ENCODE measurements at regions of chr1 and their contacts with region 1.

Region 1: DNA sequence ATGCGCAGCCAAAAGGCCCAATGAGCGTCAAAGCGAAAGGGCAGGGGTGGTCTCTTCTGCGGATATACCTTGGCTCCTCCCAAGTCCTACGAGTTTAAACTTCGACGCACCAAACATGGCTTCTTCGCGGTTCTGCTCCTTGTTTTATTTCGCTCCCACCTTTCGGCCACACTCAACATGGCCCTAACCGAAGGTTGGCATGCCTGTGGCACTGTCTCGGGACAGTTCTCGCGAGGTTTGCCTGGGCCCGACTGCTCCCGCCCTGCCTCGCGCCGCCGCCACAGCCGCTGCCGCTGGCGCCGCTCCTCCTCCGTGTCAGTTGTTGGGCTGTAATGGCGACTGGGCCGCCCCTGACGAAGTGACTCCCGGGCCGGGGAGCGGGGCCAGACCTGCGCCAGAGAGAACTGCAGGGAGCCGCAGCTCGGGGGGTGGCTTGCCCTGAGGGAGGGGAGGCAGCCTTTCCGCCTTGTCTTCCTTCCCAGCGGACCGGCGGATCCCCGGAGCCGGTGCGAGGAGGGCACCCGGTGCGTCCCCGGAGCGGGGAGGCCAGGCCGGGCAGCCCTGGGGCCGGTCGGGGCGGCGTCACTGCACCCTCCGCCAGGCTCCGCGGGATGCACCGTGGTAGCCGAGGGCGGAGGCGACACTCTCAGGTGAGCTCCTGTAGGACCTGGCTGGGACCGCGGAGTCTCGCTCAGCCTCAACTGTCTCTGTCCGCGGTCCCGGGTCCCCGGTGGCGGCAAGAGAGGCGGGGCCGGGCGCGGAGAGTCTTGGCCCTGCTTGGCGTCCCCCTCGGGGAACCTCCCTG is at the start of gene CEP350:
- DNase-seq: peak; percentile 96 to 99 (median 98)
- H3K4me3 ChIP-seq: peak within 1 kb of the TSS; percentile 88
- H3K4me3 Mint-ChIP-seq: peak within 1 kb of the TSS; percentile 90 to 96 (median 93)
- H3K27ac ChIP-seq: peak within 1 kb of the TSS; percentile 78
- H3K27ac Mint-ChIP-seq: peak within 1 kb of the TSS; percentile 93 to 98 (median 96)
- H3K4me1 ChIP-seq: peaks cover 42% of the 10 kb centered on the region
- H3K4me1 Mint-ChIP-seq: peaks cover 56 to 68% (median 64%) of the 10 kb centered on the region in 3 donors
- H3K27me3 ChIP-seq: no peaks in the 10 kb centered on the region
- H3K27me3 Mint-ChIP-seq: no peaks in the 10 kb centered on the region
- total RNA-seq, gene CEP350: 41.4 to 43.3 TPM

Region 2: GRCh38 chr1:179848233-179848632 is 106.5 kb before region 1 on chr1:
- CTCF ChIA-PET with region 1: no interaction called
- POLR2A ChIA-PET with region 1: no interaction called
- DNase-seq: no peak
- H3K4me3 ChIP-seq: no peak overlapping the region
- H3K4me3 Mint-ChIP-seq: no peak overlapping the region
- H3K27ac ChIP-seq: no peak overlapping the region
- H3K27ac Mint-ChIP-seq: no peak overlapping the region
- H3K4me1 ChIP-seq: no peaks in the 10 kb centered on the region
- H3K4me1 Mint-ChIP-seq: peaks cover 3 to 11% (median 7%) of the 10 kb centered on the region in 3 donors
- H3K27me3 ChIP-seq: no peaks in the 10 kb centered on the region
- H3K27me3 Mint-ChIP-seq: no peaks in the 10 kb centered on the region

Region 3: GRCh38 chr1:179882243-179883039 is 72.3 kb before region 1 on chr1 and contains the start of gene TOR1AIP1:
- CTCF ChIA-PET with region 1: interaction called, 18 read pairs
- POLR2A ChIA-PET with region 1: interaction called, 47 read pairs
- DNase-seq: peak; percentile 95 to 99 (median 98)
- H3K4me3 ChIP-seq: peak within 1 kb of the TSS; percentile 98
- H3K4me3 Mint-ChIP-seq: peak within 1 kb of the TSS; percentile 93 to 98 (median 95)
- H3K27ac ChIP-seq: peak within 1 kb of the TSS; percentile 100
- H3K27ac Mint-ChIP-seq: peak within 1 kb of the TSS; percentile 99 to 100 (median 100)
- H3K4me1 ChIP-seq: peaks cover 51% of the 10 kb centered on the region
- H3K4me1 Mint-ChIP-seq: peaks cover 58 to 77% (median 72%) of the 10 kb centered on the region in 3 donors
- H3K27me3 ChIP-seq: no peaks in the 10 kb centered on the region
- H3K27me3 Mint-ChIP-seq: no peaks in the 10 kb centered on the region
- total RNA-seq, gene TOR1AIP1: 51.0 to 52.6 TPM

Measured in CD8-positive, alpha-beta memory T cell (primary cell).